ENCODE measurements at regions of chr20 and their contacts with region 1.

Region 1: GRCh38 chr20:36199345-36200257 is 36.7 kb upstream of the AAR2 start:
- DNase-seq: peak; percentile 82
- ATAC-seq: peak; percentile 83

Region 2: DNA sequence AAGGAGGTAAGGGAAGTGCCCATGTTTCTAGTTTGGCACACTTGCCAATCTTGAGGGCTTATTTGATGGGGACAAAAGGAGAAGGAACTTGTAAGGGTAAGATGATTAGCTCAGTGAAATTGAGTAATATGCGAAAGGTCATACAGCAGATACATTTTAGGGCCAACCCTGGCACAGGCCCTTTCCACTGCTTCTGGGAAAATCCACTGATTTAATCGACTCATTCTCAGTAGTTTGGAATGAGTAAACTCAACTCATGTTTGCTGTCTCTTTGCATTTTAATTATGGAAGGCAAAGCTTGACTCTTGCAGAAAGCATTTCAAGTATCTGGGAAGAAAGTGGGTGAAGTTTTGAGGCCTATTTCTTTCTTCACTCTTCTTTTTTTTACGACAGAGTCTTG is 407.8 kb before region 1 on chr20:
- intact Hi-C with region 1: no loop called
- DNase-seq: no peak
- ATAC-seq: peak; percentile 36

Region 3: GRCh38 chr20:35994994-35995453 is 204.6 kb before region 1 on chr20:
- intact Hi-C with region 1: loop called (anchors 2 kb)
- DNase-seq: peak; percentile 90
- ATAC-seq: peak; percentile 97

Region 4: GRCh38 chr20:36154700-36155628 is 44.6 kb before region 1 on chr20 and contains the start of gene EPB41L1:
- intact Hi-C with region 1: loop called (anchors 5 kb)
- DNase-seq: peak; percentile 49
- ATAC-seq: peak; percentile 1
- total RNA-seq, gene EPB41L1: 14.8 TPM

Region 5: DNA sequence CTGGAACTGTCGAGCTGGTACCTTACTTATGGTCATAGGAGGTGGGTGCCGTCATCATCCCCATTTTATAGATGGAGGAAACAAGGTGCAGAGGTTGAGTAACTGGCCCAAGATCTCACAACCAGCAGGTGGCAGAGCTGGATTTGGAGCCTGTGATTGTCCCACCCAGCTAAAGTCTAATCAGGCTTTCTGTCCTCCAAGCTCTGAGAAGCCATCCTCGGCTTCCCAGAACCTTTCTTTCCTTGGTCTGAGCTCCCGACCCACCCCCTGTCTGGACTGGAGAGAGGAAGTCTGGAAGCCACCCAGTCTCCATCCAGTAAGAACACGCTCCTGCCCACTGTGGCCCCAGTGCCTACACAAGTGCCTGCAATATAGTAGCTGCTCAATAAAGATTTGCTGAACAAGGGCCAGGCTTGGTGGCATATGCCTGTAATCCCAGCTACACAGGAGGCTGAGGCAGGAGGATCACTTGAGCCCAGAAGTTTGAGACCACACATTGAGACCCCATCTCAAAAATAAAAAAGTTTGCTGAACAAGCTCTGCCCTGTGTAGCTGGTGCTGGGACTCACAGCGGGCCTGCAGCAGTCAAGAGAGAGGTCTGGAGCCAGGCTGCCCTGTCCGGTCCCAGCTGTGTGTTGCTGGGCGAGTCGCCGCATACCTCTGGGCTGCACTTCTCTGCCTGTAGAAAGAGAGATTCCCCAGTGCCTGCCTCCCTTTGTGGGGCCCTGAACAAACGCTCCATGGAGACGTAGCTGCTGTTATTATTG is 74.0 kb after region 1 on chr20:
- intact Hi-C with region 1: no loop called
- DNase-seq: no peak
- ATAC-seq: no peak

Region 6: DNA sequence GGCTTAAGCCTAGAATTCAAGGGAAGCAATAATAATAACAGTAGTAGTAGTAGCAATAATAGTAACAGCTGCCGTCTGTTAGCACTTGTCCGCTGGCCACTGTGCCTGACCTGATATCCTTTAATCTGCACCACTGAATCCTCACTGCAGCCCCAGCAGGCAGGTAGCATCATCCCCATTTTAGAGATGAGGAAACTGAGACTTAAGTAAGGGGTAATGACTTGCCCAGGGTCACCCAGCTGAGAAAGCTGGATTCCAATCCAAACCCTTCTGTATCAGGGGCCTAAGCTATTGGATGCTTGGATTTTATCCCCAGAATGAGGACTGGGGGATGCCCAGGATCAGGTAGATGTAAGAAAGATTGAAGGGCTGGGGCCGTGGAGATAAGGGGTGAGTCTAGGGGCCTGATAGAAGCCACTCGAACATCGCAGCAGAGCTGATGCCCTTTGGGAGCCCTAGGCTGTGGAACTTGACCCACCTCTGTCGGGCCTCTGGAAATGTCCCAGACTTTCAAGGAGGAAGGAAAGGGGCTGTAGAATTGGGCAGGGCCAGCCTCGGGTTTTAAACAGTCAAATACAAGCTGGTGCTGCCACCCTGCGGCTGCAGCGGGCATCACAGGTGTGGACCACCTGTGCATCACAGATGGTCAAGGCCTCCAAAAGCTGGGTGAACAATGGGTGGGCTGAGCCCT is 239.6 kb after region 1 on chr20:
- intact Hi-C with region 1: loop called (anchors 5 kb)
- DNase-seq: peak; percentile 77
- ATAC-seq: peak; percentile 76

Measured in Right ventricle myocardium superior (tissue), 1 donor.